ENCODE measurements at regions of chr10 and their contacts with region 1.

Region 1: DNA sequence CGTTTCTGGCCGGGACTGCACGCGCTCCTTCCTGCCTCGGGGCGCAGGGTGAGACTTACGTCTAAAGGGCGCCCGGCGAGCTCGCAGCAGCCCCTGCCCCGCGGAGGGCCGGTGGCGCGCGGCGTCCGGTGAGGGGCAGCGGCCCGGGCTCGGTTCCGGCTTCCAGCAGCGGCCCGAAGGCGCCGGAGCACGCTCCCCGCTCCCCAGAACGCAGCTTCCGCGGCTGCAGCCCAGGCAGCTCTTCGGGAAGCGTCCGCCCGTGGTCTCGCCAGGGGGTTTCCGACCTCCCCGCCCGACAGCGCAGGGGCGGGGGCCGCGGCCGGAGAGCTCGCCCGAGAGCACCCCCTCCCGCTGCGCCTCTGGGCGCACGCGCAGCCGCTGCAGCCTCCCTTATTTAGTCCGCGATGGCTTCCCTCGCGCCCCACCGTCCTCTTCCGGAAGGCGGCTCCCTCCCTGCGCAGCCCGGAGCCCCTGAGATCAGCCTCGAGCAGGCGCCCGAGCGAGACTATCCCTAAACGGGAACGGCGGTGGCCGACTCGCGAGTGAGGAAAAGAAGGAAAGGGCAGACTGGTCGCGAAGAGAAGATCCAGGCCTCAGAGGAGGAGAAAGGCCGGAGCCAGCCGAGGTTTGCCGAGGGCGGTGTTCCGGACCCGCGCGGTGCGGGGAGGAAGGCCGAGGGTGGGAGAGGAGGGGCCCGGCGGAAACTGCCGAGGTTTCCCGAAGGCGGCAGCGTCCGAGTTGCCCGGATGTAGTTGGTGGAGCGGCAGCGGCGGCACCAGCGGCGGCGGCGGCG is at the start of gene WAC:
- DNase-seq: peak; percentile 99
- ATAC-seq: peak; percentile 88
- H3K4me3 Mint-ChIP-seq: peak within 1 kb of the TSS; percentile 95
- H3K27ac Mint-ChIP-seq: peak within 1 kb of the TSS; percentile 100
- H3K4me1 Mint-ChIP-seq: peaks cover 56% of the 10 kb centered on the region
- H3K27me3 Mint-ChIP-seq: no peaks in the 10 kb centered on the region
- total RNA-seq, gene WAC: 103 to 136 TPM

Region 2: GRCh38 chr10:27504007-27504807 is 1028.4 kb before region 1 on chr10 and contains the start of gene RAB18:
- CTCF ChIA-PET with region 1: no interaction called
- POLR2A ChIA-PET with region 1: no interaction called
- intact Hi-C with region 1: loop called in 1 of 2 experiments (anchors 1 kb)
- DNase-seq: peak; percentile 99
- ATAC-seq: peak; percentile 98
- H3K4me3 Mint-ChIP-seq: peak within 1 kb of the TSS; percentile 93
- H3K27ac Mint-ChIP-seq: peak within 1 kb of the TSS; percentile 93
- H3K4me1 Mint-ChIP-seq: peaks cover 46% of the 10 kb centered on the region
- H3K27me3 Mint-ChIP-seq: no peaks in the 10 kb centered on the region
- total RNA-seq, gene RAB18: 44.6 to 49.3 TPM

Region 3: GRCh38 chr10:28302638-28303488 is 229.7 kb before region 1 on chr10 and contains the start of gene MPP7:
- CTCF ChIA-PET with region 1: interaction called, 3 read pairs
- POLR2A ChIA-PET with region 1: interaction called, 3 read pairs
- intact Hi-C with region 1: loop called (anchors 1 to 5 kb)
- DNase-seq: peak; percentile 97
- ATAC-seq: peak; percentile 97
- H3K4me3 Mint-ChIP-seq: peak within 1 kb of the TSS; percentile 90
- H3K27ac Mint-ChIP-seq: peak within 1 kb of the TSS; percentile 80
- H3K4me1 Mint-ChIP-seq: peaks cover 49% of the 10 kb centered on the region
- H3K27me3 Mint-ChIP-seq: no peaks in the 10 kb centered on the region
- total RNA-seq, gene MPP7: 10.9 to 11.0 TPM

Region 4: DNA sequence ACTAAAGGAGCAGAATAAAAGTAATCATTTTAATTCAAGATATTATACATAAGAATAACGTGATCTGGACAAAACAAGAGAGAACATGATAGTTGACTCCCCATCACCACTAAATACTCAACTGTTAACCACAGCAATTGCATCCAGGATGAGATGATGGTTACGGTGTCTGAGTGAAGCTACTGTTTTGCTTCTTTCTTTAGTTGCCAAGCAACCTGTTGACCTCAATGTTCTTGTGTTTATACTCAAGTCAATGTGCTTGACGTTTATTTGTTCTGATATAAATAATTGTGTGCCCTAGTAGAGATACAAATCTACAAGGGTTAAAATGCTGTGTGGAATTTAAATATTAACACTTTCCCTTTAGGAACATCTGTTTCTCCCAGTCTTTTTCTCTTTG is 198.3 kb before region 1 on chr10:
- CTCF ChIA-PET with region 1: no interaction called
- POLR2A ChIA-PET with region 1: interaction called, 5 read pairs
- intact Hi-C with region 1: loop called (anchors 2 to 10 kb)
- DNase-seq: peak; percentile 43
- ATAC-seq: peak; percentile 62
- H3K4me3 Mint-ChIP-seq: peak overlapping the region; percentile 79
- H3K27ac Mint-ChIP-seq: peak overlapping the region; percentile 100
- H3K4me1 Mint-ChIP-seq: peaks cover 70% of the 10 kb centered on the region
- H3K27me3 Mint-ChIP-seq: no peaks in the 10 kb centered on the region

Region 5: DNA sequence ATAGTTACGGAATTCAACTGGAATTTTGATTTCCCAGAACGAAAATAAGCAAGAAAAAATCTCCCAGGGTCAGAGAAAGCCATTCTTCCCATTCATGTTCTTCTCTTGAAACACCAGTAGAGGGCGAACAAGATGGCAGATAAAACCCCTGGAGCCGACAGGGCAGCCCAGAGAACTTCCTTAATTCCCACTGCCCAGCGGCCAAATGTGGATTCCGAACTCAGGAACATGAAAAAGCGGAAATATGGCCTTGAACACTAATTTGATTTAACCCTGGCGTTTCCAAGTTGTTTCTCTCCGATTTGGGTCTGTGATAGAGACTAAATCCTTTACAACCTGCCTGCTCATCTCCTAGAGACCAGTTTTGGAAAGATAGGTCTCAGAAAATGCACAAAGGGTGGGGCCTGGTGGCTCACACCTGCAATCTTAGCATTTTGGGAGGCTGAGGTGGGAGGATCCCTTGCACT is 100.3 kb before region 1 on chr10:
- CTCF ChIA-PET with region 1: no interaction called
- POLR2A ChIA-PET with region 1: no interaction called
- intact Hi-C with region 1: loop called (anchors 1 to 5 kb)
- DNase-seq: peak; percentile 26
- ATAC-seq: no peak
- H3K4me3 Mint-ChIP-seq: peak overlapping the region; percentile 11
- H3K27ac Mint-ChIP-seq: no peak overlapping the region
- H3K4me1 Mint-ChIP-seq: peaks cover 6% of the 10 kb centered on the region
- H3K27me3 Mint-ChIP-seq: peaks cover 4% of the 10 kb centered on the region

Region 6: GRCh38 chr10:28545967-28546644 is 13.5 kb after region 1 on chr10:
- CTCF ChIA-PET with region 1: interaction called, 5 read pairs
- POLR2A ChIA-PET with region 1: interaction called, 21 read pairs
- intact Hi-C with region 1: no loop called
- DNase-seq: no peak
- ATAC-seq: no peak
- H3K4me3 Mint-ChIP-seq: no peak overlapping the region
- H3K27ac Mint-ChIP-seq: peak overlapping the region; percentile 56
- H3K4me1 Mint-ChIP-seq: peaks cover 74% of the 10 kb centered on the region
- H3K27me3 Mint-ChIP-seq: no peaks in the 10 kb centered on the region

Region 7: DNA sequence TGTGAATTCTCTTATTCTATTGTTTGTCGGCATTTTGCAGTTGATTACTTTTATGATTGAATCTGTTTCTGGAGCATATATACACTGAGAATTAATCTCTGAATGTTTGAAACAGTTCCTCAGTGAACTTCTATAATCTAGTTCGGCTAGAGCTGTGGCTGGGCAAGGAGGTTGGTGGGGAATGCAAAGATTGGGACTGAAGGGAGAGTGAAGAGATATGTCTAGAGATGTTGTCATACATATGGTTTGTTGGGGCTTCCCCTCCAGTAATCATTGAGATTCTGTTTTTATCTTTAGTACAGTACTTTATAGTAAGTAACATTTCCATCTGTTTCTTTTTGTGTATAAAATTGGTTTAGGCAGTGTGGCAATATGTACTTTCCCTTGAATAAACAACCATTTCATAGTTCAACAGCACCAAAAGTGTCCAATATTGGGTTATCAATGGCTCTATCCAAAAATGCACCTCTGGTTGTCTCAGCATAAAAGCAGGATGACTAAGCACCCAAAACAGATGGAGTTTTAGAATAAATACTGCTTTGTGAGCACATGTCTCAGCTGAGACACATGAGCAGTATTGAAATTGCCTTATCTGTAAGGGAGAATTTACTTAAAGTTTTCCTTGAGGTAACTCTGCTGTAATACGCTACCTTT is 37.1 kb after region 1 on chr10:
- CTCF ChIA-PET with region 1: no interaction called
- POLR2A ChIA-PET with region 1: interaction called, 3 read pairs
- intact Hi-C with region 1: loop called in 1 of 2 experiments (anchors 5 kb)
- DNase-seq: no peak
- ATAC-seq: peak; percentile 72
- H3K4me3 Mint-ChIP-seq: no peak overlapping the region
- H3K27ac Mint-ChIP-seq: peak overlapping the region; percentile 34
- H3K4me1 Mint-ChIP-seq: peaks cover 88% of the 10 kb centered on the region
- H3K27me3 Mint-ChIP-seq: no peaks in the 10 kb centered on the region

Measured in activated CD4-positive, alpha-beta T cell treated with anti-CD3 and anti-CD28 coated beads for 36 hours (primary cell).